ENCODE measurements at regions of chr17 and their contacts with region 1.

Region 1: DNA sequence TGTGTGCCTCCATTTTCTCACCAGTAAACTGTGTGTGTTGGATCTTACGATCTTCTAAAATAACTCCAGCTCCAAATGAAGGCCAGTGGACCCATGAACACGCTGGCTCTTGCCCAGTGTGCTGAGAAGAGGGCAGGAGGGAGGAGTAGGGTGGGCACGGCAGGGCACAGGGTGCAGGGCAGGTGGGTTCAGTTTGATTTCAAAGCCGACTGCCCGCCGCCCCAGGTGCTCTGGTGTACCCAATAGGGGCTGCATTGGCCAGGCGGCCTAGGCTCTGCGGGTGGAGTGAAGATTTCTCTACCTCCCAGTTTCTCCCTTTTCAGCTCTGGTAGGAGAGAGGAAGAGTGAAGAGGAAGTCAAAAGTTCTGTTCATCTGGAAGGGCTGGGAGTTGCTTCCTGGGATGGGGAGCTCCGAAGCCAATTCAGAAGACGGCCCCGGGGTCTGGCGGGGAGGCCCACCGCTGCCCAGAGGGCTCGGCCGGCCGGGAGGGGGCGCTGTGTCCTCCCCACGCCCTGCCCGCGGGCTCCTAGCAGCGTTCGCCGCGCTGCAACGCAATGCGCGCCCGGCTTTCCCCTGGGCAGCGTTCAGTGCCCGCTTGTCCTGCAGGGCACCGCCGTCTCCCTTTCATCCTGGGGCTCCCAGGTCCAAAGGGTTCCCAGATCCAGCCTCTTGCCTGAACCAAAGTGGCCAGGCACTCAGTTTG is 1.1 kb upstream of the CRHR1 start:
- DNase-seq: peak; percentile 58 to 76
- ATAC-seq: peak; percentile 64 to 89
- H3K4me3 ChIP-seq: peak overlapping the region; percentile 50
- H3K27ac ChIP-seq: peak overlapping the region in 1 of 2 experiments; percentile 75; a peak in 2 of 6 replicates
- H3K4me1 ChIP-seq: peaks cover 5% of the 10 kb centered on the region; the same call in 1 of the 3 replicates
- CTCF ChIP-seq: peak; percentile 79
- EP300 ChIP-seq: no peak
- POLR2A ChIP-seq: no peak
- RAD21 ChIP-seq: peak; percentile 24 to 38; a peak in 3 of 5 replicates

Region 2: DNA sequence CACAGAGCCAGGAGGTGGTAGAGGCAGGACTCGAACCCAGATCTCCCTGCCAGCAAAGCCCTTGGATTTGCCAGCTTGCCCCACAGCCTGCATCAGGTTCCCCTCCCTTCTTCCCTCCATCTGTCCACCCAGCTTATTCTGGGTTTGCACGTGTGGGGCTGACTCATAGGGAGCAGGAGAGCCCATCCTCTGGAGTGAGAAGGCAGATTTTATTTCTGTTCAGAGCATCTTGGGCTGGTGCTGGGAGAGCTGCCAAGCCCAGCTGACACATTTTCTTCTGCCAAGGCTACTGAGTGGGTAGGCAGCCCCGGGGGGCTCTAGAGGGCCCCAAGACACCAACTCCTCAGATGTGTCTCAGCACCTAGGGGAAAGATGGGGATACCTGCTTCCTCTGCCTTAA is 105.3 kb before region 1 on chr17:
- CTCF ChIA-PET with region 1: interaction called, 11 read pairs
- POLR2A ChIA-PET with region 1: no interaction called
- DNase-seq: peak in 1 of 2 experiments; percentile 29
- ATAC-seq: peak; percentile 48 to 54; a peak in 4 of 6 replicates
- H3K4me3 ChIP-seq: no peak overlapping the region
- H3K27ac ChIP-seq: no peak overlapping the region
- H3K4me1 ChIP-seq: no peaks in the 10 kb centered on the region
- CTCF ChIP-seq: no peak
- EP300 ChIP-seq: no peak
- POLR2A ChIP-seq: no peak
- RAD21 ChIP-seq: no peak

Region 3: GRCh38 chr17:45747911-45748310 is 35.1 kb before region 1 on chr17:
- CTCF ChIA-PET with region 1: interaction called, 28 read pairs
- POLR2A ChIA-PET with region 1: no interaction called
- DNase-seq: no peak
- ATAC-seq: no peak
- H3K4me3 ChIP-seq: no peak overlapping the region
- H3K27ac ChIP-seq: no peak overlapping the region
- H3K4me1 ChIP-seq: no peaks in the 10 kb centered on the region
- CTCF ChIP-seq: no peak
- EP300 ChIP-seq: no peak
- POLR2A ChIP-seq: no peak
- RAD21 ChIP-seq: no peak

Region 4: DNA sequence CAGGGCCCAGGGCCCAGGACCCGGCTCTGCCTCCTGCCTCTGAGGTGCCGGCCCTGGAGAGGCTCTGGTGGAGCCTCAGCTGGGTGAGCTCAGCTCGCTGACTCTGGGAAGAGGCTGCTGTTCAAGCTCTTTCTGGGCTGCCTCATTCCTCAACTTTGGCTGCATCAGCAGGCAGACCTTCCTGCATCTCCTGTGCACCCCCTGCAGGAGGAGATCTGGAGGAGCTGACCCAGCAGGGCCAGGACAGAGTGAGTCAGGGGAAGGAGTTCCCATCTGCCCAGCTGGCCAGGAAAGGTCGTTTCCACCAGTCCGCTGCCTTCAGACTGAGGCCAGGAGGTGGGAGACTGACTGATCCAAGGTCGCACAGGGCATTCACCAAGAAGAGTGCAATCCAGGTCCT is 11.8 kb after region 1 on chr17:
- CTCF ChIA-PET with region 1: interaction called, 101 read pairs
- POLR2A ChIA-PET with region 1: no interaction called
- DNase-seq: peak; percentile 49 to 66
- ATAC-seq: peak; percentile 33 to 74; a peak in 3 of 6 replicates
- H3K4me3 ChIP-seq: no peak overlapping the region
- H3K27ac ChIP-seq: no peak overlapping the region
- H3K4me1 ChIP-seq: no peaks in the 10 kb centered on the region
- CTCF ChIP-seq: no peak; the same call in 2 of the 3 replicates
- EP300 ChIP-seq: no peak
- POLR2A ChIP-seq: no peak
- RAD21 ChIP-seq: peak in 1 of 2 experiments; percentile 28; a peak in 2 of 5 replicates

Region 5: DNA sequence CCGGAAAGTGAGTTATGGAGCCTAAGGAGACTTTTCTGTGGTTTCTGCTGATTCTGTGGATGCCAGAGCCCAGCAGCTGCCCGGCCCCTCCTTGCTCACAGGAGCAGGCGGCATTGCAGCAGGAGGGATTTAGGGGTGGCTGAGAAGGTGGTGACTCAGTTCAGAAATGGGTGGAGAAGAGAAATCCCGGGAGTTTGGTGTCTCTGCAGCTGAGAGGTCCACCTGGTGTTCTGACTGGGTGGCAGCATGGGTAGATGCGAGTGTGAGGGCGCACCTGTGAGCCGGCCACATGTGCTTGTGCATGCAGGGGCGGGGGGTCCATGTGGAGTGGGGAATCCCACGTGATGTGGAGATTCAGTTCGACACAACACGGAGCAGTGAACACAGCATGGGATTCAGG is 45.6 kb after region 1 on chr17:
- CTCF ChIA-PET with region 1: interaction called, 58 read pairs
- POLR2A ChIA-PET with region 1: no interaction called
- DNase-seq: no peak
- ATAC-seq: no peak
- H3K4me3 ChIP-seq: no peak overlapping the region
- H3K27ac ChIP-seq: no peak overlapping the region
- H3K4me1 ChIP-seq: no peaks in the 10 kb centered on the region
- CTCF ChIP-seq: no peak
- EP300 ChIP-seq: no peak
- POLR2A ChIP-seq: no peak
- RAD21 ChIP-seq: peak in 1 of 2 experiments; percentile 23; a peak in 1 of 5 replicates

Region 6: GRCh38 chr17:45857977-45858709 is 75.1 kb after region 1 on chr17:
- CTCF ChIA-PET with region 1: interaction called, 32 read pairs
- POLR2A ChIA-PET with region 1: no interaction called
- DNase-seq: no peak
- ATAC-seq: peak; percentile 46 to 59; a peak in 5 of 6 replicates
- H3K4me3 ChIP-seq: no peak overlapping the region
- H3K27ac ChIP-seq: no peak overlapping the region
- H3K4me1 ChIP-seq: no peaks in the 10 kb centered on the region
- CTCF ChIP-seq: no peak
- EP300 ChIP-seq: no peak
- POLR2A ChIP-seq: no peak
- RAD21 ChIP-seq: no peak

Measured in A549 (cell line).